ENCODE measurements at regions of chr2 and their contacts with region 1.

Region 1: DNA sequence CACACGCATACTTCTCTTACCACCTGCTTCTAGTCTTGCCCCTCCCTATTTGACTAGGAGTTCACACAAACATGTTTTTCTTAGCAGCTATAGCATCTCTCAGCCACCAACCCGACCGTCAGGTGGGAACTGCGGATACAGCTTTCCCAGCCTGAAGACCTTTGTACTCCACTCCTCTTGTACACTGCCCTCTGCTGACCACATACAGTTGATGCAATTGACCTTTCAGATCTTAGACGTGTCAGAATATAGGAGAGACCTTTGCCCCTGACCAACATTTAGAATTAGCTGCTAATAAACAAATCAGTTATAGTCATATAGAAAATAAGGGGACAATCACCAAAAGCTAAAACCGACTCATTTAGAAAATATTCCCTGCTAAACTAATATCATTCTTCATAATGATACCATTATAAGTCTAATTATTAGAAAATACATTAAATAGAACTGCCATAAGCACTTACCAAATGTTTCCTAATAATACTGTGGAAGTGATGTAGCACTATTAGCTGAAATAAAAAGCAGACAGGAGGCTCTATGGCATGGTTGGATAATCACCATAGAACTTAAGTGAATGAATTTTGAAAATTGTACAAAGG is 208.4 kb downstream of the RAD51AP2 start:
- DNase-seq: no peak
- ATAC-seq: peak; percentile 94
- H3K4me3 ChIP-seq: no peak overlapping the region
- H3K27ac ChIP-seq: no peak overlapping the region
- H3K4me1 ChIP-seq: no peaks in the 10 kb centered on the region
- H3K27me3 ChIP-seq: no peaks in the 10 kb centered on the region
- CTCF ChIP-seq: peak; percentile 68 to 77 (median 71)
- EP300 ChIP-seq: no peak
- POLR2A ChIP-seq: no peak
- RAD21 ChIP-seq: peak; percentile 79

Region 2: DNA sequence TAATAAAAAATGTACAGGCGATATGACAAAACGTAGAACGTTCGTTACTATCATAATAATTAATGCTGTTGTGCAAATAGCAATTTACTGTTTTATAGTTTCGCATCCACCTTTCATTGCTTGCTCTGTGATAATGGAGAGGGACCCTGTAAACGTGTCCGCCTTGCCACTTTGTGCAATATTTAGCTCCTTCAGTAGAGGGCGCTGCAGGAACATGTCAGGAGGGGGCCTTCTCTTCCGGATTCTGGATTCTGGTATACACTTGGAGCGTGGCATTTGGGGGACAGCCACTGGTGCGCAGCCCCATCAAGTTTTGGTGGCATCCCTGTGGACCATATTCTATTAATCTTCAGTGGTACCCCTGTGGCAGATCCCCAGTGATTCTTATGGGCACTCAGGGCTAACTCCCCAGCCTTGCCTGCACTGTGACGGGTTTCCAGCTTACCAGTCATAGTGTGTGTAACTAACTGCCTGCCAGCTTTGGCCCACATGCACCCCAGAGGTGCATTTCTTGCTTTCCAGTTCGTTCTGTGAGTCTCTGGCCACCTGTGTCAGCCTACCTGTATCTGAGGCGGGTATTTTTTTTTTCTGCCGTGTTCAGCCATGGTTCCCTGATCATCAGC is 784.5 kb before region 1 on chr2:
- CTCF ChIA-PET with region 1: interaction called, 13 read pairs
- POLR2A ChIA-PET with region 1: no interaction called
- RAD21 ChIA-PET with region 1: interaction called, 4 read pairs
- SMC1A ChIA-PET with region 1: interaction called, 4 read pairs
- in situ Hi-C with region 1: no loop called
- intact Hi-C with region 1: no loop called
- DNase-seq: no peak
- ATAC-seq: peak; percentile 80
- H3K4me3 ChIP-seq: no peak overlapping the region
- H3K27ac ChIP-seq: no peak overlapping the region
- H3K4me1 ChIP-seq: no peaks in the 10 kb centered on the region
- H3K27me3 ChIP-seq: no peaks in the 10 kb centered on the region; a peak in 1 of 4 replicates
- CTCF ChIP-seq: peak; percentile 52 to 64 (median 58)
- EP300 ChIP-seq: no peak
- POLR2A ChIP-seq: no peak
- RAD21 ChIP-seq: peak; percentile 74

Region 3: GRCh38 chr2:17270894-17271293 is 38.9 kb before region 1 on chr2:
- CTCF ChIA-PET with region 1: no interaction called
- POLR2A ChIA-PET with region 1: no interaction called
- RAD21 ChIA-PET with region 1: no interaction called
- SMC1A ChIA-PET with region 1: no interaction called
- in situ Hi-C with region 1: no loop called
- intact Hi-C with region 1: no loop called
- DNase-seq: peak; percentile 16
- ATAC-seq: peak; percentile 38; the same call in 2 of the 3 replicates
- H3K4me3 ChIP-seq: no peak overlapping the region
- H3K27ac ChIP-seq: no peak overlapping the region
- H3K4me1 ChIP-seq: no peaks in the 10 kb centered on the region
- H3K27me3 ChIP-seq: 0 out of 4 replicates have a peak, but pooled peaks cover 0 to 3% of the 10 kb centered on the region in 2 experiments
- CTCF ChIP-seq: no peak
- EP300 ChIP-seq: no peak
- POLR2A ChIP-seq: no peak
- RAD21 ChIP-seq: no peak

Region 4: GRCh38 chr2:17298453-17298852 is 11.4 kb before region 1 on chr2:
- CTCF ChIA-PET with region 1: interaction called, 19 read pairs
- POLR2A ChIA-PET with region 1: no interaction called
- RAD21 ChIA-PET with region 1: no interaction called
- SMC1A ChIA-PET with region 1: interaction called, 4 read pairs
- in situ Hi-C with region 1: no loop called
- intact Hi-C with region 1: no loop called
- DNase-seq: no peak
- ATAC-seq: no peak
- H3K4me3 ChIP-seq: no peak overlapping the region
- H3K27ac ChIP-seq: no peak overlapping the region
- H3K4me1 ChIP-seq: no peaks in the 10 kb centered on the region
- H3K27me3 ChIP-seq: no peaks in the 10 kb centered on the region
- CTCF ChIP-seq: no peak
- EP300 ChIP-seq: no peak
- POLR2A ChIP-seq: no peak
- RAD21 ChIP-seq: no peak

Measured in GM12878 (cell line).